Activated CD4-positive, alpha-beta memory T cell treated with anti-CD3 and anti-CD28 coated beads for 36 hours (primary cell): ENCODE measurements at regions of chr15 and their contacts with region 1.

Region 1: DNA sequence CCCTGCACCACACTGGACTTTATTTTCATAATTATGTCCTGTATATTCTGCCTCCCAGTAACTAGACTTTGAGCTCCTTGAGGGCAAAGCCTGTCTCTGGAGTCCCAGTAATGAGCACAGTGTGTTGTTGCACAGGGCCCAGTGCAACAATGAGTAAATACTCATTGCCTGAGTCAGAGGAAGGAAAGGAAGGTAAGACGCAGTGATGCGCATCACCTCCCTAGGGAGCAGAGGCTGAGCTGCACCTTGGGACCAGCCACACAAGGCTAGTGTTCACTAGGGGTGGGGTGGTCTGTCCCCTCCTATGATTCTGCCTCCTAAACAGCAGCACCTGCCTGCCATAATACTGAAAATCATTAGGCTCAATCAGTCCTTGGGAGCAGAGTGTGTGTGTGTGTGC is 86.6 kb upstream of the ADAMTSL3 start:
- DNase-seq: no peak
- H3K4me3 Mint-ChIP-seq: no peak overlapping the region
- H3K27ac Mint-ChIP-seq: no peak overlapping the region
- H3K4me1 Mint-ChIP-seq: no peaks in the 10 kb centered on the region
- H3K27me3 Mint-ChIP-seq: peaks cover 3% of the 10 kb centered on the region

Region 2: GRCh38 chr15:83339396-83339795 is 227.9 kb before region 1 on chr15:
- CTCF ChIA-PET with region 1: no interaction called
- POLR2A ChIA-PET with region 1: no interaction called
- intact Hi-C with region 1: no loop called
- DNase-seq: no peak
- H3K4me3 Mint-ChIP-seq: no peak overlapping the region
- H3K27ac Mint-ChIP-seq: no peak overlapping the region
- H3K4me1 Mint-ChIP-seq: no peaks in the 10 kb centered on the region
- H3K27me3 Mint-ChIP-seq: peaks cover 5% of the 10 kb centered on the region

Region 3: DNA sequence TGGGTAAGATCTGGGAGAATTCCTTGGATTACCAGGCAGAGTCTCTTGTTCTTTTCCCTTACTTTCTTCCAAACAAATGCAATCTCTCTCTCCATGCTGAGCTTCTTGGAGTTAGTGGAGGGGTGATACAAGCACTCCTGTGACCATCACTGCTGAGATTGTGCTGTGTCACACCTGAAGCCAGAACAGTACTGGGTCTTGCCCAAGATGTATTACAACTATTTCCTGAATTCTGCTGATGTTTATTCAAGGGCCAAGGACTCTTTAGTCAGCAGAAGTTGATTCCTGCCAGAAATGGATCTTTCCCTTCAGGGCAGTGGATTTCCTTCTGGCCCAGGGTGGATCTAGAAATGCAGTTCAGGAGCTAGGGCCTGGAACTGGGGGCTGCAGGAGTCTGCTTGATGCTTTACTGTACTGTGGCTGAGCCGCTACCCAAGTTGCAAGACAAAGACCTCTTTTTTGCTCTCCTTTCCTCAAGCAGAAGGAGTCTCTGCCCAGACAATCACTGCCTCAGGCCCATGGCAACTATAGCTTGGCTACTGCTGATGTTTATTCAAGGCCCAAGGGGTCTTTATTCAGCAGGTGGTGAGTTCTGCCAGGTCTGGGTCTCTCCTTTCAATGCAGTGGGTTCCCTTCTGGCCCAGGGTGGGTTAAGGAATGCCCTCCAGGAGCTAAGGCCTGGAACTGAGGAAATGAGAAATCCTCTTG is 21.4 kb before region 1 on chr15:
- CTCF ChIA-PET with region 1: no interaction called
- POLR2A ChIA-PET with region 1: no interaction called
- intact Hi-C with region 1: no loop called
- DNase-seq: no peak
- H3K4me3 Mint-ChIP-seq: no peak overlapping the region
- H3K27ac Mint-ChIP-seq: no peak overlapping the region
- H3K4me1 Mint-ChIP-seq: no peaks in the 10 kb centered on the region
- H3K27me3 Mint-ChIP-seq: no peaks in the 10 kb centered on the region

Region 4: DNA sequence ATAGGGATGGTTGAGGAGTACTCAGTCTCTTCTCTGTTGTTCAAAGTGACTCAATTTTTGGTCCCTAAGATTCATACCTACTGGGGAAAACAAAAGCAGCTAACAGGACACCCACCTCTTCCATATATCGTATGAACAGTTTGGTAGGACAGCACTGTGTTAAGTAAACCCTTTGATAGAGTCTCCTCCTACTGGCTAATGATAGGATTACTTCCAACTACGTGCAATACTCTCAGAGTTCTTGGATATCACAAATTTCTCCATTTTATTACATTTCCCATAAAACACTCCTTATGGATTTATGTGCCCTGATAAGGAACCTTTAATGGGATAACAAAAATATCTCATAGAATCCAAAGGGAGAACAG is 468.1 kb after region 1 on chr15:
- CTCF ChIA-PET with region 1: no interaction called
- POLR2A ChIA-PET with region 1: no interaction called
- intact Hi-C with region 1: loop called (anchors 5 kb)
- DNase-seq: no peak
- H3K4me3 Mint-ChIP-seq: no peak overlapping the region
- H3K27ac Mint-ChIP-seq: no peak overlapping the region
- H3K4me1 Mint-ChIP-seq: no peaks in the 10 kb centered on the region
- H3K27me3 Mint-ChIP-seq: peaks cover 3% of the 10 kb centered on the region